Colonic mucosa (tissue), 4 donors: ENCODE measurements at regions of chr3 and their contacts with region 1.

Region 1: GRCh38 chr3:8441969-8442559 is 59.6 kb upstream of the LMCD1 start:
- DNase-seq: peak; percentile 32
- H3K4me3 ChIP-seq: no peak overlapping the region
- H3K27ac ChIP-seq: no peak overlapping the region
- H3K4me1 ChIP-seq: peaks cover 8% of the 10 kb centered on the region
- H3K27me3 ChIP-seq: no peaks in the 10 kb centered on the region
- CTCF ChIP-seq: peak; percentile 57

Region 2: GRCh38 chr3:8501371-8502131 is 59.5 kb after region 1 on chr3 and contains the start of gene LMCD1:
- intact Hi-C with region 1: loop called (anchors 10 kb)
- DNase-seq: peak; percentile 95
- H3K4me3 ChIP-seq: peak within 1 kb of the TSS; percentile 44
- H3K27ac ChIP-seq: peak within 1 kb of the TSS; percentile 52
- H3K4me1 ChIP-seq: no peaks in the 10 kb centered on the region
- H3K27me3 ChIP-seq: no peaks in the 10 kb centered on the region
- CTCF ChIP-seq: no peak
- total RNA-seq, gene LMCD1: 5.5 to 7.6 TPM

Region 3: GRCh38 chr3:8607234-8608040 is 165.4 kb after region 1 on chr3:
- intact Hi-C with region 1: loop called (anchors 5 kb)
- DNase-seq: no peak
- H3K4me3 ChIP-seq: no peak overlapping the region
- H3K27ac ChIP-seq: no peak overlapping the region
- H3K4me1 ChIP-seq: no peaks in the 10 kb centered on the region
- H3K27me3 ChIP-seq: no peaks in the 10 kb centered on the region
- CTCF ChIP-seq: peak; percentile 26

Region 4: DNA sequence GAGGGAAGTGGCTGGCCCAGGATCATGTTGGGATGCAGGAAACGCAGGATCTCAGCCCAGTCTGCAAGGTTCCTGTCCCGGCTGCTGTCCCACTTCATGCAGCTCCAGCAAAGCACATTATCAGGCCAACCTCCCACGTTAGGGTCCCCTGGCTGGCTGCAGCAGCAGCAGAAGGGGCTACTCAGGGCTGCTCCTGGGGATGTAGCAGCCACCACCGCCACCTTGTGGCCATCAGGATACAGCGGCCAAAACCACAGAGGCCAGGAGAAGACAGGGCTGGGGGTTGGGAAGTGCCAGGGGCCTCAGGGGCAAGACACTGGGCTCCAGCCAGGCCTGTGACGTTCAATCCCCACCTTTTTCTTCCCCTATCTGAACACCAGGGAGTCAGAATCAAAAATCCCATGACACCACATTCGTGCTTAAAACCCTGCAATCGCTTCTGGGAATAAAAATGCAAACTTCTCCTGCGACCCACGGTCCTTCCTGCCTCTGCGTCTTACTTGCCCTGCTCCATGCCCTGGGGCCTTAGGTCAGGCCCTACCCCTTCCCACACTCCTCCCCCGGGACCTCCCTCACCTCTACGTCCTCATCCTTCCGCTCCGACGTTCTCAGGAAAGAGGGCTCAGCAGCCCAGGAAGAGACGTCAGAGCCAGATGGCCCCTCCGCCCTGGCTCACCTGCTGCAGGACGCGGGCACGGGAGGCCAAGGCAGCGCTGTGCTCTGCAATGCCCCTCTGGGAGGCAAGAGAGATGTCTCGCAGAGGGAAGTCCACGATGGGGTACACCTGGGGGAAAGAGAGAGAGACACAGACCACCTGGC is 181.0 kb after region 1 on chr3:
- intact Hi-C with region 1: loop called (anchors 2 kb)
- DNase-seq: peak; percentile 58
- H3K4me3 ChIP-seq: no peak overlapping the region
- H3K27ac ChIP-seq: no peak overlapping the region
- H3K4me1 ChIP-seq: no peaks in the 10 kb centered on the region
- H3K27me3 ChIP-seq: no peaks in the 10 kb centered on the region
- CTCF ChIP-seq: peak; percentile 86